Left cardiac atrium (tissue), 4 donors: ENCODE measurements at regions of chr6 and their contacts with region 1.

Region 1: DNA sequence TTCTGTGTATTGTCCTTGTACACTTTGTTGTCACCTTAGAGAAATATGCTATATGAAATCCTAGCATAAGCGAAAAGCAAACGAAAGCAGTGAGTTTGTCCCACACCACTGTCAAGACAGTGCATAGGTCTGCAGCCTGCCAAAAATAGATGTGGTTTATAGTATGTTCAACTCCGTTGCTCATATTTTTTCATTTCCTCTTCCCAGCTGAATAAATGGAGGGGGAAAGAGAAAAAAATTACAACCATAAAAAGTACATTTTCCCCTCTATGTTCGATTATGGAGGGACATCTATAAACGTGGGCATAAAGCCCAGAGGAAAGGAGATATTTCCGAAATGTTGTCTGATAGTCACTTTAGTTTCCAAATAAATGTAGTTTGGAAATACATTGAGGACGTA is 25.8 kb downstream of the PRL start:
- DNase-seq: no peak
- ATAC-seq: no peak

Region 2: DNA sequence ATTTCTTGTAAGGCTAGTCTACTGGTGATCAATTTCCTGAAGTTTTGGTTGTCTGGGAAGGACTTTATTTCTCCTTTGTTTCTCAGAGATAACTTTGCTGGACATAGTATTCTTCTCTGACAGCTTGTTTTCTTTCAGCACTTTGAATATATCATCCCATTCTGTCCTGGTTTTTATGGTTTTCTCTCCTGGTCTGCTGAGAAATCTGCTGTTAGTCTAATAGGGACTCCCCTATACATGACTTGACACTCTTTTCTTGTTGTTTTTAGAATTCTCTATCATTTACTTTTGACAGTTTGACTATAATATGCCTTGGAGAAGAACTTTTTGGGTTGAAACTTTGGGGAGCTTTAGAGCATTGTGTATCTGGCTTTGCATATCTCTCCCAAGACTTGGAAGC is 86.7 kb before region 1 on chr6:
- intact Hi-C with region 1: loop called in 1 of 2 experiments (anchors 5 kb)
- DNase-seq: no peak
- ATAC-seq: no peak